Cardiac septum (tissue), 1 donor: ENCODE measurements at regions of chr18 and their contacts with region 1.

Region 1: DNA sequence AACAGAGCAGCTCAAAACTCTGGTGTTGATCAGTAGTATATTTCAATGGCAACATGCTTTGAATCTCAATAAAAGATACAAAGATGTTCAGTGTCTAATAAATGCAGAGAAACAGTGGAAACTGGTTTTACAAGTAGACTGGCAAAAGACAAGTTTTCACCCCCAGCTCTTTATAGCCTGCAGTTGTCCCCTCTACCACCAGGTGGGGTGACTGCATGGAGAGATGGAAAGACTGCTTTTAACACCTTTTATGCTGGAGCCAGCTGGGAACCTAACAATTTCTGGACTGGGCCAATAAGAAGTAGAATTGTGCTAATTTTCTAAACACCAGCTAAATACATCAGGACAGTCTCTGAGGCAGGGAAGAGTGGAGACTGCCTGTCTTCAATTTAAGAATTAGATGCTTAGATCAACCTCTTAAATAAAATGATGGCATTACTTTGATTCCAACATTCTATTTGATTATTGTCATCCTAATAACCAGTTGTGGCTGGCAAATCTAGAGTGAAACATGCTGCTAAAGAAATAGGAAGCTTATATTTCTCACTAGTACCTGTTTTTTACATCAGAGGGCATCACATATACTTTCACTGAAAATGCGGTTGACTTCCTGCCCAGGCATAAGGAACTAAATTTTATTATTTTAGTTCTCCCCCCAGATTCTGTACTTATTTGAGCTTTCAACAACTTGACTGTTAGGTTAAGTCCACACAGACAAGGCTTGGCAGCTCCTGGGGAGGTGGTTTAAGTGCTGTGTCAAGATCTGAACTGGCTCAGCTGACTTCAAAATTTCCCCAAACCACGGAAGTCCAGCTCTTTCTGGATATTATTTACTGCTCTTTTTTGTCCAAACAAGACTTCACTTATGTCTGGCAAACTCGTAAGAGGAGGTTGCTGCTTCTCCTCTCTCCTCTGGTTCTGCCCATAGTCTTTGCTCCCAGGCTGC is 140.5 kb downstream of the TPGS2 start:
- DNase-seq: no peak

Region 2: GRCh38 chr18:36757081-36757480 is 68.8 kb after region 1 on chr18:
- intact Hi-C with region 1: loop called (anchors 2 kb)
- DNase-seq: no peak

Region 3: DNA sequence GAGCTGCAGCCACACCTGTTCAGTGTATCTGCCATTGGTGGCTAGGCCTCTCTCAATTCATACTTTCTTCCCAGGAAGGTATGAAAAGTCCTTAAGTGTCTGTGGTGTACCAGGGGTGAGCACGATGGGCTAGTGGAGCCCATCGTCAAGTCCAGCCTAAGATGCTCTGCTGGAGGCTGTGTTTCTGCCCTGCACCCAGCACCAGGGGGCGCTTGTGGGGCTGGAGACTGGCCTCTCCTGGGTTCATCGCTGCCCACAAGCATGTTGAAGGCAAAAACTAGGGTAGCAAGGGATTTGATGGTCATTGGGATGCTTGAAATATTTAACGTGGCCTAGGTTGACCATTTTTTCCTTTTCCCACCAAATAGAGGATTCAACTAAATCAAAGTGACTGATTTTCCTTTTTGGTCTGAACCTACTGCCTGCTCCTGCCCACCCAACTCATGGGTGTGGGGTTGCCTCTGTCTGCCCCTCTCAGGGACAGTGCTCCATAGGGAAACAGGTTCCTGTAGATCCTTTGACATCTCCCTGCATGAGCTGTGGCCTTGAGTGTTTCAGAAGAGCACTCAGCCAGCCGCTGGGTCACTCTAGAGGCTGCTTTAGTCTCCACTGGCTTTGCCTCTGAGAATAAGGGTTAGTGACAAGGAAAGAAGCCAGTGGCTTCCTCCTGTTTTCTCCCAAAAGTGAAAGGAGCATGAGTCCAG is 81.5 kb after region 1 on chr18:
- intact Hi-C with region 1: no loop called
- DNase-seq: no peak

Region 4: GRCh38 chr18:36809590-36810381 is 121.5 kb after region 1 on chr18:
- intact Hi-C with region 1: loop called (anchors 5 kb)
- DNase-seq: no peak

Region 5: DNA sequence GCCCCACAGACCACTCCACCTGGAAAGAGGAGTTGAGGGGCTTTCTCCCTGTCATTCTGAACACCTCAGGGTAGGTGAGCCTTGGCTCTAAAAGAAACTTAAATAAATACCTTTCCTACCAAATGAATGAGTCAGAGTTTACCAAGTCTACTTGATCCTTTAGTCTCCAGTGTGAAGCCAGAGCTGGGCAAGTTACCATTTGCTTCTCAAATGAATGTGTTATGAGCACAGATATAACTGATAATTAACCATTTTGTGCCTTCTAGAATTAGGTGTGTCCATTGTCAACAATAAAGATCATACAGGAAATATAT is 488.3 kb after region 1 on chr18:
- intact Hi-C with region 1: no loop called
- DNase-seq: no peak